T-cell (primary cell): ENCODE measurements at regions of chr11 and their contacts with region 1.

Region 1: GRCh38 chr11:77820563-77821348 is at the starts of genes AAMDC and RSF1:
- DNase-seq: peak; percentile 89 to 98 (median 96)
- ATAC-seq: peak; percentile 86 to 87 (median 86)
- H3K4me3 ChIP-seq: peak within 1 kb of the TSS; percentile 97 to 100
- H3K4me3 Mint-ChIP-seq: peak within 1 kb of the TSS; percentile 89 to 99 (median 98)
- H3K27ac ChIP-seq: peak within 1 kb of the TSS; percentile 76
- H3K27ac Mint-ChIP-seq: peak within 1 kb of the TSS; percentile 95 to 96
- H3K4me1 ChIP-seq: peaks cover 15 to 17% of the 10 kb centered on the region in 2 experiments
- H3K4me1 Mint-ChIP-seq: peaks cover 41 to 43% (median 41%) of the 10 kb centered on the region in 3 donors
- H3K27me3 ChIP-seq: no peaks in the 10 kb centered on the region
- H3K27me3 Mint-ChIP-seq: no peaks in the 10 kb centered on the region
- total RNA-seq, gene AAMDC: 4.0 to 11.1 (median 7.0) TPM
- total RNA-seq, gene RSF1: 81.5 to 96.8 (median 91.2) TPM

Region 2: DNA sequence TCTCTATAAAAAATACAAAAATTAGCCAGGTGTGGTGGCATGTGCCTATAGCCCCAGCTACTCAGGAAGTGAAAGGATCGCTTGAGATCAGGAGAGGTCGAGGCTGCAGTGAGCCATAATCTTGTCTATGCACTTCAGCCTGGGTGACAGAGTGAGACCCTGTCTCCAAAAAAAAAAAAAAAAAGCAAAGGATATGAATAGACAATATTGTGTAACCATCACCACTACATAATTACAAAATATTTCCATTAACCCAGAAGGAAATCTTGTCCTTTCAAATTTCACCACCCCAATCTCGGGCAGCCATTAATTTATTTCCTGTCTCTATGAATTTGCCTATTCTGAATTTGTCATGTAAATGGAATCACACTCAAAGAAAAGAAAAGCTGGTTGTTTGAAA is 21.4 kb before region 1 on chr11:
- CTCF ChIA-PET with region 1: no interaction called
- POLR2A ChIA-PET with region 1: no interaction called
- DNase-seq: no peak
- ATAC-seq: no peak
- H3K4me3 ChIP-seq: no peak overlapping the region
- H3K4me3 Mint-ChIP-seq: no peak overlapping the region
- H3K27ac ChIP-seq: no peak overlapping the region
- H3K27ac Mint-ChIP-seq: peak overlapping the region in 1 of 2 donors; percentile 11
- H3K4me1 ChIP-seq: peaks cover 0 to 10% of the 10 kb centered on the region in 2 experiments
- H3K4me1 Mint-ChIP-seq: peaks cover 65 to 79% (median 77%) of the 10 kb centered on the region in 3 donors
- H3K27me3 ChIP-seq: no peaks in the 10 kb centered on the region
- H3K27me3 Mint-ChIP-seq: no peaks in the 10 kb centered on the region

Region 3: DNA sequence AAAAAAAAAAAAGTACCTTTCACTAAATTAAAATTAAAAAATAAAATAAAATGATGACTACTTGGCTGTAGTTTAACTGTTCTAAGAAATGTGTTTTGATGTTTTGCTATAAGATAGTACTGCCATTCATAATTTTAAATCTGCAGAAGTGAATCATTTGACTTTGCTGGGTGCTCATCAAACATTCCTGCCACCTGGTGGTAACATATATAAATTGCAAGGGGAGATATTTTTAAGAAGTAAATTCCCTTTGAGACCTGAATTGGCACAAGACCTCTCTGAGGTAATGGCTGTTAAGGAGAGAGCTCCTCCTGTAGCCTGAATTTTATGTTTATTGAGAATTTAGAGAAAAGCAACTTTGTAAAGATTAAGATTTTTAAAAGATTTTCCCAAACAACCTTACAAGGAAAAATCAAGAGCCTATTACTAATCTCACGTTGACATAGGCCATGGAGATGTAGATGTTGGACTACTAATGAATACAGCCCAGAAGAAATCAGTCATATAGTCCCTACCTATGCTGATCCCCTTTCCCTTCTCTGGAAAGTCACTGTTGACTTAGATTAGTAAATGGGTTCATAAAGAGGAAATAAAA is 765.8 kb after region 1 on chr11:
- CTCF ChIA-PET with region 1: no interaction called
- POLR2A ChIA-PET with region 1: interaction called in 1 of 2 experiments, 10 read pairs
- DNase-seq: peak in 1 of 35 experiments; percentile 43
- ATAC-seq: no peak
- H3K4me3 ChIP-seq: no peak overlapping the region
- H3K4me3 Mint-ChIP-seq: no peak overlapping the region
- H3K27ac ChIP-seq: no peak overlapping the region
- H3K27ac Mint-ChIP-seq: no peak overlapping the region
- H3K4me1 ChIP-seq: no peaks in the 10 kb centered on the region
- H3K4me1 Mint-ChIP-seq: no peaks in the 10 kb centered on the region
- H3K27me3 ChIP-seq: no peaks in the 10 kb centered on the region
- H3K27me3 Mint-ChIP-seq: peaks cover 5 to 16% of the 10 kb centered on the region in 2 donors